Endothelial cell of umbilical vein (primary cell): ENCODE measurements at regions of chr7 and their contacts with region 1.

Region 1: DNA sequence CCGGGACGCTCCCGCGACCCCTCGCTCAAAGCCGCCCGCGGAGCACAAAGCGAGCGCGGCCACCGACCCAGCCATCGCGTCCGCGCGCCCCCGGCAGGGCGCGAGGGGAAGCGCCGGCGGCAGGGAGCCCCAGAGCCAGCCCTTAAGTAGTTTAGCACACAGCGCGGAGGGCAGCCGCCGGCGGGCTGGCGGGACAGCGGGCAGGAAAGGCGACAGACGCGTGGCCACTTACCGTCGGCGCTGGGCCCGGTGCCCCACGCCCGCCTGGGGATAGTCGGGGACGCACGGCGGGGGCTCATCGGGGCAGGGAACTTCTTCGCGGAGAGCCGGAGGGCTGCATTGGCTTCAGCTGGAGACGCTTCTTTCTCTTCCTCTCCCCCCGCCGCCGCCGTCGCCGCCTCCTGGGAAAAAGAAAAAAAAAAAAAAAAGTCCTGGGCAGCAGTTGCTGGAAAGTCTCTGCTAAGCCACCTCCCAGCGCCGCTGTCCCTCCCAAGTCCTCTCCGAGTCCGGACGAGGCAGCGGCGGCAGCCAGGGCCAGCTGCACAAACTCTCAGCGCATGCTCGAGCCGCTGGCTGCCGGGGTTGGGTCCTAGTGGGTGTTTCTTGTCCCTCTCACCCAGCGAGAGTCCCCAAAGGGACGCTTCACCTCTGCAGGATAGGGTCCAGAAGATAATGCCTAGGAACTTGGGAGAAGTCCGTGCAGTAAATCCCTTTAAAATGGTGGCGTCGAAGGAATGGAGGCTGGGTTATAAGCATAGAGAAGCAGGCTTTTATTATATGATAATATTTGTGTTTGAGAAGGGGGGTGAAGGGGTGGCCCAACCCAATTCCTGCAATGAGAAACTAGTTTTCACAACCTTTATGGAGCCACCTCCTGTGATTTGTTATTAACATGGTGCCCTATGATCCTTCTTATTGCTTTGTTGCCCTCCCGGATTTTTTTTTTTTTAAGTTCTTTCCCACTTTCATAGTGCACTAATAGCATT is at the start of gene TSPAN12:
- DNase-seq: peak; percentile 93
- H3K4me3 ChIP-seq: peak within 1 kb of the TSS; percentile 86 to 98 (median 97)
- H3K27ac ChIP-seq: peak within 1 kb of the TSS; percentile 95
- H3K4me1 ChIP-seq: peaks cover 15% of the 10 kb centered on the region
- H3K27me3 ChIP-seq: no peaks in the 10 kb centered on the region
- CTCF ChIP-seq: peak; percentile 67 to 76
- POLR2A ChIP-seq: peak; percentile 31
- total RNA-seq, gene TSPAN12: 19.0 and 19.8 TPM in 2 replicates

Region 2: GRCh38 chr7:120805636-120806388 is 52.1 kb before region 1 on chr7:
- CTCF ChIA-PET with region 1: interaction called, 7 read pairs
- POLR2A ChIA-PET with region 1: no interaction called
- dilution Hi-C with region 1: no loop called
- intact Hi-C with region 1: loop called (anchors 1 kb)
- DNase-seq: peak; percentile 80
- H3K4me3 ChIP-seq: no peak overlapping the region
- H3K27ac ChIP-seq: no peak overlapping the region
- H3K4me1 ChIP-seq: peaks cover 12% of the 10 kb centered on the region
- H3K27me3 ChIP-seq: no peaks in the 10 kb centered on the region
- CTCF ChIP-seq: peak; percentile 67 to 77
- POLR2A ChIP-seq: no peak

Region 3: DNA sequence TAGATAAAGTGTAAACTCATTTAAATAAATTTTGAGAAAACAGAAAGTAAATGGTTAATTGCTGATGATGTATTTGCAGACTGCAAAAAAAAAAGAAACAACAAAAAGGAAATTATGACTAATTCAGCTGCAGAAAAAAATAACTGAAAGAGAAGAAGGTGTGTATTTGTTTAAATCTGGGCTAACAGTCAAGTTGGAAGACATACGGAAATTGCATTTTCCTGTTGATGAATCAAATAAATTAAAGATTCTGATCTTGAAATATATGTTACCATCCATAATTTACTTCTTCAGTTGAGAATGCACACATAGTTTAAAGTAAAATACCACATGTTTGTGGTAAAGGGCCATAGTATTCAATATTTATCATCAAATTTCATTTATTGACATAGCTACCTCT is 73.4 kb after region 1 on chr7:
- CTCF ChIA-PET with region 1: interaction called, 8 read pairs
- POLR2A ChIA-PET with region 1: no interaction called
- dilution Hi-C with region 1: no loop called
- intact Hi-C with region 1: loop called (anchors 1 kb)
- DNase-seq: peak; percentile 76
- H3K4me3 ChIP-seq: no peak overlapping the region
- H3K27ac ChIP-seq: peak overlapping the region; percentile 52
- H3K4me1 ChIP-seq: peaks cover 36% of the 10 kb centered on the region
- H3K27me3 ChIP-seq: no peaks in the 10 kb centered on the region
- CTCF ChIP-seq: no peak
- POLR2A ChIP-seq: no peak

Region 4: DNA sequence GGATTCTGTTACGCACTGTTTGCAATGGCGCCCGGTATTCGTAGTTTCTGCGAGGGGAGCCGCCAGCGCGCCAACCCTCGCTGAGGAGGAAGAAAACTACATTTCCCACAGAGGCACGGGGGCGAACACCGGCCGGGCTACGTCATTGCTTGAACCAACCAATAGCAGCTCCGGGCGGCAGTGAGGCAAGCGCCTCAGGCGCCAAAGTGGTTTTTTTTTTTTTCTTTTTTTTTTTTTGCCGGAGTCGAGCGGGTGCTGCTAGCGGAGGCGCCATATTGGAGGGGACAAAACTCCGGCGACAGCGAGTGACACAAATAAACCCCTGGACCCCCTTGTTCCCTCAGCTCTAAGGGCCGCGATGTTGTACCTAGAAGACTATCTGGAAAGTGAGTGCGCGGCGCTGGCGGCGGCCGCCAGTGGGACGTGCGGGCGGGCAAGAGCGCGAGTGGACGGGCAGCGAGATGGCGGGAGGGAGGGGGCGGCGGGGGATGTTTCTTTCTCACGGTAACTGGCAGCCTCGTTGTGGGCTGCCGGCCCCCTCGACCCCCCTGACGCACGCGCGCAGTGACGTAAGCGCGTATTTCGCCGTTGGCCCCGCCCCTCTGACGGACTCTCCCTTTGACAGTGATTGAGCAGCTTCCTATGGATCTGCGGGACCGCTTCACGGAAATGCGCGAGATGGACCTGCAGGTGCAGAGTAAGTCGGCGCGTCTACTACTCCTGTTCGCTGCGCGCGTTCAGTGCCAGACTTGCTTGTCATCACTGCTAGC is 92.8 kb after region 1 on chr7 and contains the start of gene ING3:
- CTCF ChIA-PET with region 1: no interaction called
- POLR2A ChIA-PET with region 1: no interaction called
- dilution Hi-C with region 1: no loop called
- intact Hi-C with region 1: loop called (anchors 1 kb)
- DNase-seq: peak; percentile 98
- H3K4me3 ChIP-seq: peak within 1 kb of the TSS; percentile 57 to 100 (median 98)
- H3K27ac ChIP-seq: peak within 1 kb of the TSS; percentile 96
- H3K4me1 ChIP-seq: peaks cover 18% of the 10 kb centered on the region
- H3K27me3 ChIP-seq: no peaks in the 10 kb centered on the region
- CTCF ChIP-seq: no peak
- POLR2A ChIP-seq: peak; percentile 82
- total RNA-seq, gene ING3: 19.4 and 19.6 TPM in 2 replicates

Region 5: DNA sequence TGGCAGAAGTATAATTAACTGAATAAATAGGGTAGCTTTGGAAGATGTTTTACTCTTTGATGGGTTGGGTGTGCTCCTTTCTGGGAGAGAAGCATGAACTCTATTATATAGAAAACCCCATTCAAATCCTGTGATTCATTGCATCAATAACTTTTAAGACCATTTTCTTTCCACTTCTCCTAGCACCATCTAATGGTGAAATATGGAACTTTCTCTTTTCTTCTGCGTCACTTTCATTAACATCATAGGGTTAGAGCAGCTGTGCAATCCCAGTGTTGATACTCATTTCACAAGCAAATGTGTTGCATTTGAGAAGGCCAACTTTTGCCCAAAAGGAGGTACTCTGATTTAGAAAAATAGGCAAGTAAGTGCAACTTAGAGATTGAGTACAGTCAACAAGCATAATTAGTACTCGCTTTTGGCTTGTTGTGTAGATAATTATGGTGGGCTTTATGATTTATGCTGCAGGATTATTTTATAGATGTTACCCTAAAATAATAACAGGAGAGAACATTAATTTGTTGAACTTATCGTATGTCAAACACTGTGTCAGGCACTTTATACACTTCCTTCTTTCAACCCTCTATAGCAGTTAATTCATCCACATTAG is 223.6 kb after region 1 on chr7:
- CTCF ChIA-PET with region 1: interaction called, 3 read pairs
- POLR2A ChIA-PET with region 1: no interaction called
- dilution Hi-C with region 1: no loop called
- intact Hi-C with region 1: loop called (anchors 1 kb)
- DNase-seq: peak; percentile 77
- H3K4me3 ChIP-seq: no peak overlapping the region
- H3K27ac ChIP-seq: no peak overlapping the region
- H3K4me1 ChIP-seq: peaks cover 24% of the 10 kb centered on the region
- H3K27me3 ChIP-seq: no peaks in the 10 kb centered on the region
- CTCF ChIP-seq: peak; percentile 40 to 44
- POLR2A ChIP-seq: no peak

Region 6: GRCh38 chr7:121351679-121352078 is 493.8 kb after region 1 on chr7:
- CTCF ChIA-PET with region 1: no interaction called
- POLR2A ChIA-PET with region 1: no interaction called
- dilution Hi-C with region 1: no loop called
- intact Hi-C with region 1: loop called (anchors 10 kb)
- DNase-seq: no peak
- H3K4me3 ChIP-seq: no peak overlapping the region
- H3K27ac ChIP-seq: no peak overlapping the region
- H3K4me1 ChIP-seq: no peaks in the 10 kb centered on the region
- H3K27me3 ChIP-seq: no peaks in the 10 kb centered on the region
- CTCF ChIP-seq: no peak
- POLR2A ChIP-seq: no peak